Activated naive CD4-positive, alpha-beta T cell treated with anti-CD3 and anti-CD28 coated beads for 36 hours (primary cell): ENCODE measurements at regions of chr16 and their contacts with region 1.

Region 1: GRCh38 chr16:54455030-54455725 is 168.6 kb upstream of the IRX3 start:
- DNase-seq: no peak
- H3K4me3 Mint-ChIP-seq: no peak overlapping the region
- H3K27ac Mint-ChIP-seq: no peak overlapping the region
- H3K4me1 Mint-ChIP-seq: no peaks in the 10 kb centered on the region
- H3K27me3 Mint-ChIP-seq: peaks cover 16% of the 10 kb centered on the region

Region 2: DNA sequence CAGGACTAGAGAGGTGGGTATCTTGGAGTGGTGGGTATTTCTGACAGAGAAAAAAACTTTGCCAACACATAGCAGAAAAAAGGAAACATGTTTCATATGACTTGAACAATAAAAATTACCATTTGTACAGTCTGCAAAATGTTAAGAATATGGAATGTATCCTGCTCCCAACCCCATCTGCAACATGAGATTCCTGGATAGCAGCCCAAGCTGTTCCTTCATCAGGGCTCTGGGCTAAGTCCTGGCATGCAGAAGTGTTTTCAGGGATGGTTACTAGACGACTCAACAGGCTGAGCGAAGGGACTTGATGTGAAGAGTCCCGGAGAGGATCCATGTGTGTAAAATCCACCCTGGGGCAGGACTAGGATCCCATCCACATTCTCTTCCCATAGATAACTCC is 47.6 kb before region 1 on chr16:
- CTCF ChIA-PET with region 1: no interaction called
- intact Hi-C with region 1: loop called (anchors 2 kb)
- DNase-seq: no peak
- H3K4me3 Mint-ChIP-seq: no peak overlapping the region
- H3K27ac Mint-ChIP-seq: no peak overlapping the region
- H3K4me1 Mint-ChIP-seq: no peaks in the 10 kb centered on the region
- H3K27me3 Mint-ChIP-seq: peaks cover 8% of the 10 kb centered on the region

Region 3: DNA sequence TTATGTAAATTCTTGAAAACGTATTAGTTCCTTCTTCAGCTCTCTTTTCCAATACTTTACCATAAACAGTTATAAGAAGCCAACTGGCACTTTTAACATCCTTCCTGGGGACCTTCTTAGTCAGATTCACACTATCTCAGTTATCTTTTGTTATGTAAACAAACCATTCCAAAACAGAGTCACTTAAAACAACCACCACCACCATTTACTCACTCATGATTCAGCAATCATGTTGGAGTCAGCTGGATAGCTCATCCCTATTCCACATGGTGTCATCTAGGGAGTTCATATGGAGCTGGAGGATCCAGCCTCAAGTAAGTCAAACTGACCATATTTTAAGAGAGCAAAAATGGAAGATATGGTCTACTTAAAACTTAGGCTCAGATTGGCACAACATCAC is 71.7 kb after region 1 on chr16:
- CTCF ChIA-PET with region 1: no interaction called
- intact Hi-C with region 1: no loop called
- DNase-seq: no peak
- H3K4me3 Mint-ChIP-seq: no peak overlapping the region
- H3K27ac Mint-ChIP-seq: no peak overlapping the region
- H3K4me1 Mint-ChIP-seq: no peaks in the 10 kb centered on the region
- H3K27me3 Mint-ChIP-seq: peaks cover 15% of the 10 kb centered on the region